Activated T-helper 2 cell treated with anti-CD3 and anti-CD28 coated beads, Interferon-gamma antibody, Interleukin-2, Interleukin-4, amounts not matched to agents 10 μg/mL and 5 μg/mL and 100 μg/mL, durations not matched to agents 14 hours and 24 hours and 36 hours (primary cell): ENCODE measurements at regions of chr4 and their contacts with region 1.

Region 1: GRCh38 chr4:67700738-67701516 is at the start of gene UBA6:
- DNase-seq: peak; percentile 94
- H3K4me3 Mint-ChIP-seq: peak within 1 kb of the TSS; percentile 99
- H3K27ac Mint-ChIP-seq: peak within 1 kb of the TSS; percentile 96
- H3K4me1 Mint-ChIP-seq: peaks cover 53% of the 10 kb centered on the region
- H3K27me3 Mint-ChIP-seq: no peaks in the 10 kb centered on the region
- total RNA-seq, gene UBA6: 84.8 and 88.4 TPM in 2 replicates

Region 2: GRCh38 chr4:67658302-67658701 is 42.6 kb before region 1 on chr4:
- intact Hi-C with region 1: loop called (anchors 5 kb)
- DNase-seq: no peak
- H3K4me3 Mint-ChIP-seq: no peak overlapping the region
- H3K27ac Mint-ChIP-seq: peak overlapping the region; percentile 35
- H3K4me1 Mint-ChIP-seq: peaks cover 10% of the 10 kb centered on the region
- H3K27me3 Mint-ChIP-seq: no peaks in the 10 kb centered on the region

Region 3: DNA sequence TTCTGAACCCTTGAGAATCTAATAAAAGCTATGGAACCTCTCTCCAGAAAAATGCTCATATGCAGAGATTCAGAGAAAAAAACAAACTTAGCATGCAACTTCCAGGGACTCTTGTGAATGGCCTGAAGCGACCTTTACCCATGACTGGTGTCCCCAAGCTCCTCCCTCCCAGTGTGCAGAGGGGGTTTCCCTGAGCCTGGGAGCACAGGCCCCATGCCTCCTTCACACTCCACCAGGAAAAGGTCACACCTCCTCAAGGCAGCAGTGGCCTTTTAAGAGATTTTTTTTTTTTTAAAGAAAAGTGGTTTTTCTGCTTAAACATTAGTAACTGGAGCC is 13.3 kb after region 1 on chr4:
- intact Hi-C with region 1: loop called (anchors 1 kb)
- DNase-seq: no peak
- H3K4me3 Mint-ChIP-seq: peak overlapping the region; percentile 35
- H3K27ac Mint-ChIP-seq: peak overlapping the region; percentile 95
- H3K4me1 Mint-ChIP-seq: peaks cover 28% of the 10 kb centered on the region
- H3K27me3 Mint-ChIP-seq: no peaks in the 10 kb centered on the region

Region 4: DNA sequence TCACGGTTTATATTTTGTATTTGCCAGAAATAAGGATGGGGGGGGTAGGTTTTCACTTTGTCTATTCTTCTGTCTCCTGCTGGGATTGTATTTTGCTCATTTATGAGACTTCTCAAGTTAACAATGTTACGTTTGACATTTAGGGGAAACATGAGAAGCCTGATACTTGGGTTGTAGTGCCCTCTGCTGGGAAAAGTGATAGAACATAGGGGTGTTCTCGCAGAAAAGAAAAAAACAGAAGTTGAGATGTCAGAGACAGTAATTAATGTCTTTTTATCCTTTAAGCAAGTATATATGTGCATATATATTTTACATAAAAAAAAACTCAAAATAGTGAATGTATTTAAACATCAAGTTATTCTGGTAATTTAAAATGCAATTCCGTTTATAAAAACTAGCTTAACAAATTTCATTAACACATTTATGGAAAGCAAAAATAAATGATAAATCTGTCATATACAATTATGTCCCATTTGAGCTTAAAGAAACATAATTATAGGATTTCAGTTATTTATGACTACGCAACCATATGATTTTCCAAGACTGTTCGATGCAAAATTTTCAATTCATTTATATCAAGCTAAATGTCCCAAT is 474.7 kb after region 1 on chr4:
- intact Hi-C with region 1: loop called (anchors 1 kb)
- DNase-seq: peak; percentile 18
- H3K4me3 Mint-ChIP-seq: no peak overlapping the region
- H3K27ac Mint-ChIP-seq: no peak overlapping the region
- H3K4me1 Mint-ChIP-seq: peaks cover 6% of the 10 kb centered on the region
- H3K27me3 Mint-ChIP-seq: peaks cover 4% of the 10 kb centered on the region

Region 5: DNA sequence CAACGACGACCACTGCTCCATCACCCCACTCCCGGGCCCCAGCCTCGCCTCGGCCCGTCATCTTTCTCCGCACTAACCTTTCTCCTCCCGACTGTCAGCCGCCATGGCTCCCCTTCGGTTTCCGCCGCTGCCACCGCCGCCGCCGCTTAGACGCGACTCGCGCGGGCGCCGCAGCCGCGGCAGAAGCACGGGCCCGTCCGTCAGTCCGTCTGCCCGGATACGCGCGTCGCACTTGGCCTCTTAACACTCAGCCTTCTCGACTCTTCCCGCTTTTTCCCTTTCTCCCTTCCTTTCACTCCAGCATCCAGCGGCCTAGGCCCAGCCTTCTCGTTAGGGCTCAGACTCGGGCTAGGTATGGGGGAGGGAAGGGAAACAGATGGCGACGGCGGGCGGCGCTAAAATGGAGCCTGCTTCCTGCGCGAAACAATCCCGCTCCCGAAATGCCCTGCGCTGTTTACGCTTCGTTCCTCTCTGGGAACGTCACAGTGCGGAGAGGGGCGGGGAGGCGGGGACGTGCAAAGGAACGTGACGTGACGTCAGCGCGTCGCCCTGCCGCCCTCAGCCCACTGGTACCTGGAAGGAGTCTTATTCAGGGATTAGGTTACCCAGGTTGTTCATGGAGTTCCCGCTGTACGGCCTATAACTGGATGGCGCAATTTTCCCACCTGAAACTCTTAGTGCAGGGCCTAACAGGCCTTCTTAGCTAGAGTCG is 648.9 kb after region 1 on chr4 and contains the start of gene YTHDC1:
- intact Hi-C with region 1: loop called (anchors 2 kb)
- DNase-seq: peak; percentile 89
- H3K4me3 Mint-ChIP-seq: peak within 1 kb of the TSS; percentile 97
- H3K27ac Mint-ChIP-seq: peak within 1 kb of the TSS; percentile 97
- H3K4me1 Mint-ChIP-seq: peaks cover 31% of the 10 kb centered on the region
- H3K27me3 Mint-ChIP-seq: no peaks in the 10 kb centered on the region
- total RNA-seq, gene YTHDC1: 79.9 and 83.6 TPM in 2 replicates